Activated CD4-positive, alpha-beta T cell treated with anti-CD3 and anti-CD28 coated beads for 36 hours (primary cell): ENCODE measurements at regions of chrX and their contacts with region 1.

Region 1: GRCh38 chrX:110407910-110408545 is 49.4 kb downstream of the RTL9 start:
- DNase-seq: peak; percentile 43
- ATAC-seq: peak; percentile 39
- H3K4me3 Mint-ChIP-seq: no peak overlapping the region
- H3K27ac Mint-ChIP-seq: no peak overlapping the region
- H3K4me1 Mint-ChIP-seq: peaks cover 3% of the 10 kb centered on the region
- H3K27me3 Mint-ChIP-seq: no peaks in the 10 kb centered on the region

Region 2: GRCh38 chrX:109911046-109911445 is 497.0 kb before region 1 on chrX:
- CTCF ChIA-PET with region 1: no interaction called
- POLR2A ChIA-PET with region 1: no interaction called
- intact Hi-C with region 1: loop called in 1 of 2 experiments (anchors 10 kb)
- DNase-seq: no peak
- ATAC-seq: no peak
- H3K4me3 Mint-ChIP-seq: no peak overlapping the region
- H3K27ac Mint-ChIP-seq: no peak overlapping the region
- H3K4me1 Mint-ChIP-seq: no peaks in the 10 kb centered on the region
- H3K27me3 Mint-ChIP-seq: no peaks in the 10 kb centered on the region

Region 3: GRCh38 chrX:110156167-110156754 is 251.8 kb before region 1 on chrX:
- CTCF ChIA-PET with region 1: interaction called, 178 read pairs
- POLR2A ChIA-PET with region 1: no interaction called
- intact Hi-C with region 1: loop called (anchors 1 kb)
- DNase-seq: no peak
- ATAC-seq: no peak
- H3K4me3 Mint-ChIP-seq: no peak overlapping the region
- H3K27ac Mint-ChIP-seq: no peak overlapping the region
- H3K4me1 Mint-ChIP-seq: peaks cover 5% of the 10 kb centered on the region
- H3K27me3 Mint-ChIP-seq: no peaks in the 10 kb centered on the region

Region 4: GRCh38 chrX:110167952-110168451 is 240.0 kb before region 1 on chrX:
- CTCF ChIA-PET with region 1: interaction called, 178 read pairs
- POLR2A ChIA-PET with region 1: no interaction called
- intact Hi-C with region 1: no loop called
- DNase-seq: peak; percentile 69
- ATAC-seq: peak; percentile 66
- H3K4me3 Mint-ChIP-seq: no peak overlapping the region
- H3K27ac Mint-ChIP-seq: no peak overlapping the region
- H3K4me1 Mint-ChIP-seq: peaks cover 5% of the 10 kb centered on the region
- H3K27me3 Mint-ChIP-seq: no peaks in the 10 kb centered on the region

Region 5: GRCh38 chrX:110541266-110541665 is 133.2 kb after region 1 on chrX:
- CTCF ChIA-PET with region 1: no interaction called
- POLR2A ChIA-PET with region 1: no interaction called
- intact Hi-C with region 1: no loop called
- DNase-seq: no peak
- ATAC-seq: no peak
- H3K4me3 Mint-ChIP-seq: no peak overlapping the region
- H3K27ac Mint-ChIP-seq: no peak overlapping the region
- H3K4me1 Mint-ChIP-seq: no peaks in the 10 kb centered on the region
- H3K27me3 Mint-ChIP-seq: no peaks in the 10 kb centered on the region